ENCODE measurements at regions of chr3 and their contacts with region 1.

Region 1: GRCh38 chr3:142319094-142319493 is 93.7 kb upstream of the GK5 start:
- DNase-seq: no peak
- ATAC-seq: no peak
- H3K4me3 ChIP-seq: no peak overlapping the region
- H3K4me3 Mint-ChIP-seq: no peak overlapping the region
- H3K27ac ChIP-seq: no peak overlapping the region
- H3K27ac Mint-ChIP-seq: no peak overlapping the region
- H3K4me1 ChIP-seq: no peaks in the 10 kb centered on the region
- H3K4me1 Mint-ChIP-seq: no peaks in the 10 kb centered on the region
- H3K27me3 ChIP-seq: no peaks in the 10 kb centered on the region
- H3K27me3 Mint-ChIP-seq: no peaks in the 10 kb centered on the region

Region 2: GRCh38 chr3:142337994-142338393 is 18.9 kb after region 1 on chr3:
- CTCF ChIA-PET with region 1: no interaction called
- POLR2A ChIA-PET with region 1: interaction called in 1 of 2 experiments, 10 read pairs
- DNase-seq: no peak
- ATAC-seq: no peak
- H3K4me3 ChIP-seq: no peak overlapping the region
- H3K4me3 Mint-ChIP-seq: no peak overlapping the region
- H3K27ac ChIP-seq: no peak overlapping the region
- H3K27ac Mint-ChIP-seq: no peak overlapping the region
- H3K4me1 ChIP-seq: no peaks in the 10 kb centered on the region
- H3K4me1 Mint-ChIP-seq: peaks cover 5 to 17% (median 10%) of the 10 kb centered on the region in 3 donors
- H3K27me3 ChIP-seq: no peaks in the 10 kb centered on the region
- H3K27me3 Mint-ChIP-seq: no peaks in the 10 kb centered on the region

Measured in T-cell (primary cell).